ENCODE measurements at regions of chr1 and their contacts with region 1.

Region 1: DNA sequence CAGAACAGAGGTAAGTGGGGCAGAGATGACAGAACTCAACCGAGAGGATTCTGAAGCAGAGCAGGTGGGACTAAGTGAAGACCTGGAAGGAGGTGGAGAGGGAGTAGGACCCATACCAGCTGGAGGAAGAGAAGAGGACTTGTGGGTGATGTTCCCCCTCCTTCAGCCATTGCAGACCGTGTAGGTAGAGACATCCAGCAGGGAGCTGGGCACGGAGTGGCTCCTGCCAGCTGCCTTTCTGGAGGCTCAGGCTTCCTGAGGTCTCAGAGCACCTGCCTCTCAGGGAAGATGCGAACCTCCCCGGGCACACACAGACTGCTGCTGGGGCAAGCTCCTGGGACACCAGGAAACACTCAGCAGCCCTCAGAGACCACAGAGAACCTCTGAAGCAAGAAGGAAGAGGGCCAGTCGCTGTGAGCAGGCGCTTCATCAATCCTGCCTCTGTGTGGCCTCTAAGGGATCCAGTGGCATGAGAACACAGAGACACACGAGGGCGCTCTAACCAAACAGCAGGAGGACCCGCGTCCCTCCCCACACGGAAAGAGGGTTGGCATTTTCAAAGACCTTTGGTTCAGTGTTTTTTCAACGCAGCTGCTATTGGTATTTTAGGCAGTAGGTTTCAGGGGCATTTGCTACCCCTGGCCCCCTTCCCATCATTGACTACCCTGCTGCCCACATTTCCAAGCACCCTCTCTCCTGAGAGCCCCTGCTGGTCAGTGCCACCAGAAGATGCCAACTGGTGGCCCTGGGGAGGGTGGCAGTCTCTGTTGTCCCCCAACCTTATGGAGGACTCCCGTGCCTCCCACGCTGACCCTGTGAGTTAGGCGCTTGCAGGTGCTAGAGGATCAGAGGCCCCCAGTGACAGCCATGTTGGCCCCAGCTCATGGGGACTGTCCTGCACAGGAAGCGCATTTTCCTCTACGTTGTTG is 89.6 kb upstream of the EDN2 start:
- DNase-seq: peak; percentile 91
- H3K4me3 Mint-ChIP-seq: no peak overlapping the region
- H3K27ac Mint-ChIP-seq: peak overlapping the region; percentile 46
- H3K4me1 Mint-ChIP-seq: peaks cover 30% of the 10 kb centered on the region
- H3K27me3 Mint-ChIP-seq: no peaks in the 10 kb centered on the region

Region 2: DNA sequence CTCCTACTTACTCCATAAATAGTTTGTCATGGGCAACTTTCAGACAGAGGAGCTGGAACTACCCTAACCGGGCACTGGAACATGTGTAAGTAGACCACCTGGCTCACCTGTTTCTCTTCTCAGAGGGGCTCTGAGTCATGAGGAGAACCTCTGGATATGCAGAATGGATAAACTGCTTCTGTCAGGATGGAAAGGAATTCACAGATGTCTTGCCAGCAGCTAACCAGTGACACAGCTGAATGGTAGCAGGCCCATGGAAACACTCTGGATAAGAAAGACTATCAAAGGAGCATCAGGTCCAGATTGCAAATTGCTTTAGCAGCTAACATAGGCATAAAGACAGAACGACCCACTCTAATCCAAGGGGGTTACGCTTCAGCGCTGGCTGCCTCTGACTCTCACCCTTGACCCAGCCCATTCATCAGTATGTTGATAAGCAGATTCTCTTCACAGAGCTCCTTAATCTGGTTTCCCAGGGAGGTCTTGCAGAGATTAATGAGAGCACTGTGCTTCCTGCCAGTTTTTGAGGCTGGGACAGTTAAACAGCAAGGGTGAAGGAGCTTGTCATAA is 290.5 kb after region 1 on chr1:
- CTCF ChIA-PET with region 1: interaction called, 11 read pairs
- POLR2A ChIA-PET with region 1: no interaction called
- DNase-seq: no peak
- H3K4me3 Mint-ChIP-seq: no peak overlapping the region
- H3K27ac Mint-ChIP-seq: no peak overlapping the region
- H3K4me1 Mint-ChIP-seq: peaks cover 50% of the 10 kb centered on the region
- H3K27me3 Mint-ChIP-seq: no peaks in the 10 kb centered on the region

Region 3: GRCh38 chr1:41891199-41891896 is 317.3 kb after region 1 on chr1:
- CTCF ChIA-PET with region 1: interaction called, 10 read pairs
- POLR2A ChIA-PET with region 1: no interaction called
- DNase-seq: peak; percentile 79
- H3K4me3 Mint-ChIP-seq: peak overlapping the region; percentile 70
- H3K27ac Mint-ChIP-seq: peak overlapping the region; percentile 88
- H3K4me1 Mint-ChIP-seq: peaks cover 77% of the 10 kb centered on the region
- H3K27me3 Mint-ChIP-seq: no peaks in the 10 kb centered on the region

Measured in activated CD4-positive, alpha-beta T cell treated with anti-CD3 and anti-CD28 coated beads, Interleukin-2, amount 10 ng/mL, durations not matched to agents 7 days and 5 days (primary cell).